Panc1 (cell line): ENCODE measurements at regions of chr16 and their contacts with region 1.

Region 1: DNA sequence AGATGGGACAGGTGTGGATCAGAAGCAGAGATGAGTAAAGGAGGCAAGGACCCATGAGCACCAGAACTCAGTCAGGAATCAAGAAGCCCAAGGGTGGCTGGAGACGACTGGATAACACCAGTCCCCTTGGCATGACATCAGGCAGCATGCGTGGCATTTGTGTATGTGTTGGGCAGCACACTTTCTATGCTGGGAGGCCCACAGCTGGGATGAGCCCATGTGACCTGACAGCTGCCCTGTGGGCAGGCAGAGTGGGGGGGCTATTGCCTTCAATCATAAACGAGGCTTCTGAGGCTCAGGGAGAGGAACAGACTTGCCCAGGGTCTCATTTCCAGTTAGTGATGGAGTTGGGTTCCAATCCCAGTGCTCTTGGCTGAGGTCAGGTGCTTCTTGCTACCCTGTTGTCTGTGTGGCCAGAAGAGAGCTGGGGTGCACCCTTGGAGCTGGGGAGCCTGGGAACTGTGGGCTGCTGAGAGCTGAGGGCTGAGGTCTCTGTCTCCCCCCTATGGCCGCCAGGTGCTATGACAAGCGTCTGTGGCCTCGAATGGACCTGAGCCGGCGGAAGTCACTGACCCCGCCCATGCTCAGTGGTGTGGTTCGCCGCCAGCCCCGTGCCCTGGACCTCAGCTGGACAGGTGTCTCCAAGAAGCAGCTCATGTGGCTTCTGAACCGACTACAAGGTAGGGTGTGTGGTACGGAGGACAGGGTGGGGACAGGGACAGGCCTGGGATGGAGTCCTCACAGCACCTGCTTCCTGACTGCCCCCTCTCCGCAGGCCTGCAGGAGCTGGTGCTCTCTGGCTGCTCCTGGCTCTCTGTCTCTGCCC is 7.1 kb upstream of the ORAI3 start:
- DNase-seq: no peak
- ATAC-seq: peak; percentile 95
- H3K4me3 ChIP-seq: no peak overlapping the region
- H3K27ac ChIP-seq: peak overlapping the region; percentile 44; the same call in 1 of the 2 replicates
- H3K4me1 ChIP-seq: peaks cover 8% of the 10 kb centered on the region; the same call in 1 of the 2 replicates
- H3K27me3 ChIP-seq: no peaks in the 10 kb centered on the region
- CTCF ChIP-seq: peak; percentile 97

Region 2: DNA sequence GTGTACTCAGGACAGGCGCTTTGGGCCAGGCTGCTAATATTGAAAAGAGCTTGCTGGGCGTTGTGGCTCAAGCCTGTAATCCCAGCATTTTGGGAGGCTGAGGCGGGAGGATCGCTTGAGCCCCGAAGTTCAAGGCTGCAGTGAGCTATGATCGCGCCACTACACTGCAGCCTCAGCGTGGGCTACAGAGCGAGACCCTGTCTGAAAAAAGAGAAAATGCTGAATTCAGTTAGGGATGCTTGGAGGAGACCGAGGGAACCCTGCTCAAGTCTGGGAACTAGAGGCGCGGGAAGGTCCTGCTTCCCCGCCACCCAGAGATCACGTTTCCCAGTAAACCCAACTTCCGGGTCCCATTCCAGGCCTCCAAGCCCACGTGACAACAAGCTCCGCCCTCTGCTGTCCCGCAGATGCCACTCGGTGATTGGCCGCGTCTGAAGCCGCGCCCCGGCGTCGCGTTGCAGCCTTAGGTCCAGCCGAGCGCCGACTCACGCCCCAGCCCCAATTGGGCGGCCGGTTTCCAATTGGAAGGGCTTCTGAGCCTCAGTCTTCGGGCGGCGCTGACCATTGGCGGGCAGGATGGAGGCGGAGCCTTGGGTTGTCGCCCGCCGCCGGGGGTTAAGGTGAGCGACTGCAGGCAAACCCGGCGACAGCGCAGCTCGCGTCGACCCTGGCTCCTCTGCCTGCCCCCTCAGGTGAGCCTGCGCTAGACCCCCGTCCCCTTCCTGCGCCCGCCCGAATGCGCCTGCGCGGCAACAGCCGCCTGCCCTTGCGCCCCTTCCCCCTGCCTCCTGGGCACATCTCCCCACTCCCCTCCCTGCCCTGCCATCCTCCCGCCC is 193.8 kb before region 1 on chr16 and contains the start of gene PHKG2:
- CTCF ChIA-PET with region 1: no interaction called
- POLR2A ChIA-PET with region 1: no interaction called
- in situ Hi-C with region 1: no loop called
- intact Hi-C with region 1: no loop called
- DNase-seq: peak; percentile 96
- ATAC-seq: peak; percentile 98
- H3K4me3 ChIP-seq: peak within 1 kb of the TSS; percentile 68 to 73
- H3K27ac ChIP-seq: peak within 1 kb of the TSS; percentile 94
- H3K4me1 ChIP-seq: peaks cover 19% of the 10 kb centered on the region
- H3K27me3 ChIP-seq: no peaks in the 10 kb centered on the region
- CTCF ChIP-seq: no peak
- total RNA-seq, gene PHKG2: 43.1 TPM

Region 3: DNA sequence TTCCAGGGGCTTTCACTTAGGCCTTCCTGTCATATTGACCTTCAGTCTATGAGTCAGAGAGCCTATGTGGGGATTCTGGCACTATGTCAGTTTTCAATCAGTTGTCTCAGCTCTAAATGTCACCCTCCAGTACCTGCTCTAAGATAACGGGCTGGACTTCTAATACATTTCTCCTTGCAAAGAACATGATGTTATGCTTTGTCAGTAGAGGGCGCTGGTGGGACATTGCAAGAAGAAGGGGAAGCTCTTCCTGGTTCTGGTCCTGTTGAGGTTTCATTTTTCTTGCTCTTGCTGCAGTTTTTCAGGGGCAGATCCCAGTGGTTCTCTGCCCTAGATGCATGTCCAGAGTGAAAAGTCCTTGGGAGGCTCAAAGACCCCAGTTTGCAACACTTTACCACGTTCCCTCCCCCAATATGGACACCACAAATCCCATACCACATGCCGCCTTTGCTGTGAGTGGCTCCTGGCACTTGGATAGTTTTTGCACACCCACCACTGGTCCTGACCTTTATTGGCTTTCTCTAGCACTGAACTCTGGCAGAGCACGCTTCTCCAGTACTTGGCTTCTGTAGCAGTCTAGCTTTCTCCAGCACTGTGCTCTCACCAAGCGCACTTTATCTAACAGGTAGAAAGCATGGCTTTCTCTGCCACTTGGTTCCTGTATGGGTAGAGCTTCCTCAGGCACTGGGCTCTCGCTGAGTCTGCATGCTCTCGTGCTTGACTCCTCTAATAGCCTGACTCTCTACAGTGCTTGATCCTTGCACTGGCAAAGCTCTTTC is 97.0 kb before region 1 on chr16:
- CTCF ChIA-PET with region 1: interaction called, 15 read pairs
- POLR2A ChIA-PET with region 1: no interaction called
- in situ Hi-C with region 1: no loop called
- intact Hi-C with region 1: no loop called
- DNase-seq: peak; percentile 55
- ATAC-seq: peak; percentile 96
- H3K4me3 ChIP-seq: peak overlapping the region in 1 of 2 experiments; percentile 31; a peak in 2 of 4 replicates
- H3K27ac ChIP-seq: 0 out of 2 replicates have a peak overlapping the region, but pooled peaks have one; percentile 36
- H3K4me1 ChIP-seq: no peaks in the 10 kb centered on the region; the same call in 1 of the 2 replicates
- H3K27me3 ChIP-seq: no peaks in the 10 kb centered on the region
- CTCF ChIP-seq: peak; percentile 94

Region 4: GRCh38 chr16:30893744-30894539 is 47.9 kb before region 1 on chr16 and contains the start of gene BCL7C:
- CTCF ChIA-PET with region 1: interaction called, 3 read pairs
- POLR2A ChIA-PET with region 1: interaction called, 15 read pairs
- in situ Hi-C with region 1: no loop called
- intact Hi-C with region 1: no loop called
- DNase-seq: no peak
- ATAC-seq: peak; percentile 91
- H3K4me3 ChIP-seq: peak within 1 kb of the TSS; percentile 72 to 80
- H3K27ac ChIP-seq: peak within 1 kb of the TSS; percentile 87
- H3K4me1 ChIP-seq: peaks cover 24% of the 10 kb centered on the region
- H3K27me3 ChIP-seq: no peaks in the 10 kb centered on the region
- CTCF ChIP-seq: peak; percentile 89
- total RNA-seq, gene BCL7C: 45.8 TPM

Region 5: DNA sequence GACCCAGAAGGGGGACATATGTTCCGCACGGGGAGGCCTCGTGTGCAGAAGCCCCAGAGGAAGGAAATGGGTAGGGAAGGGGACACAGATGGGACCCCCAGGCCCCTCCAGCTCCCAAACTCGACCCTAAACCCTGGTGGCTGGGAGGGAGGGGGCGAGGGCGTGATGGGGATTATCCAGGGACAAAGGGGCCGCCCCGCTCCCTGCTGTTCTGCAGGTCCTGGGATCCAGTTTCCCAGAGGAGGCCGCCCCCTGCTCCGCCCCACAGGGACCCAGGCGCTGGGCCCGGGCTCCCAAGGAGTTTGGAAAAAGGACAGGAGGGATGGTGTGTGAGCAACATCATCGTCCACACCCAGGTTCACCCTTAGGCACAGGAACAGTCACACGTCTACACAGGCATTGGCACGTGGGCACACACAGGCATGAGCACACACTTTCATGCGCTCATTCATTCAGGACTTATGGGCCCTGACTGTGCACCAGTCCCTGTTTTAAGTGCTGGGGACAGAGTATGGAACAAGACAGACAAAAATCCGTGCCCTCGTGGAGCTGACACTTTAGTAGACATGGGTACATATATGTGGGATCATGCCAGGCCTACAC is 31.3 kb before region 1 on chr16:
- CTCF ChIA-PET with region 1: no interaction called
- POLR2A ChIA-PET with region 1: interaction called, 11 read pairs
- in situ Hi-C with region 1: no loop called
- intact Hi-C with region 1: no loop called
- DNase-seq: no peak
- ATAC-seq: no peak
- H3K4me3 ChIP-seq: no peak overlapping the region
- H3K27ac ChIP-seq: no peak overlapping the region
- H3K4me1 ChIP-seq: 0 out of 2 replicates have a peak, but pooled peaks cover 3% of the 10 kb centered on the region
- H3K27me3 ChIP-seq: no peaks in the 10 kb centered on the region
- CTCF ChIP-seq: no peak

Region 6: DNA sequence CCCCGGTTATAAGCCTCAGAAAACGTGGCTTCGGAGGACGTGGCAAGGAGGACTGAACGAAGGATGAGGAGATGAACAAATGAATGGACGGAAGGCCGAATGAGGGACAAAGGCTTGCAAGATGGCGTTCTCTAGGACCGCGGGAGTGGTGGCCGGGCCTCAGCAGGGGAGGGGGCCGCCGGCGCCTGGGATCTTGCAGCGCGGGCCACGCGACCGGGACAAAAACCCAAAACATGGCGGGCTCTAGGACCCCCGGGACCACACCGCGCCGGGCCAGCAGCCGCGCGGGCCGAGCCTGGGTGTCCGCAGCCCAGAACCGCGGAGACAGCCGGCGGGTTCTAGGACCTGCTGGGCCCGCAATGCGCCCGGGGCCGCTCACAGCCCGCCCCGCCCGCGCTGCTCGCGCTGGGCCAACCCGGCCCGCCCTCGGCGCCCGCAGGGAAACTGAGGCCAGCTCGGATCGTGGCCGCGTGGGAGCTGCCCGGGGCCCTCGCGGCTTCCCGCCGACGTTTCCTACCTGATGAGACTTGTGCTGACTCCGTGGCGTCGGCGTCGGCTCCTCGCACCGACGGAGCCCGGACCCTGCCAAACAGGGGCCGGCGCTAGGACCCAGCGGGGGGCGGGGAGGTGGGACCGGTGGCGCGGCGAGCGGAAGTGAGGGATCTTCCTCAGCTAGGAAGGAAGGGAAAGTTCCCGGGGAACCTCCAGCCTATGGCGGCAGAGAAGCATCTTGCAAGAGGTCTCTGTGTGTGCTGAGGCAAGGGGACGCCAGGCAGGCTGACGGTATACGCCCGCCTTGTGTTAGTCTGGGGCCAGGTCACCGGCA is 131.5 kb after region 1 on chr16:
- CTCF ChIA-PET with region 1: no interaction called
- POLR2A ChIA-PET with region 1: no interaction called
- in situ Hi-C with region 1: no loop called
- intact Hi-C with region 1: no loop called
- DNase-seq: peak; percentile 30
- ATAC-seq: peak; percentile 89
- H3K4me3 ChIP-seq: peak overlapping the region; percentile 99
- H3K27ac ChIP-seq: peak overlapping the region; percentile 97
- H3K4me1 ChIP-seq: peaks cover 10% of the 10 kb centered on the region; the same call in 1 of the 2 replicates
- H3K27me3 ChIP-seq: no peaks in the 10 kb centered on the region
- CTCF ChIP-seq: no peak